Activated CD4-positive, alpha-beta memory T cell treated with anti-CD3 and anti-CD28 coated beads, Interleukin-2, amount 10 ng/mL, durations not matched to agents 7 days and 5 days (primary cell): ENCODE measurements at regions of chrX and their contacts with region 1.

Region 1: DNA sequence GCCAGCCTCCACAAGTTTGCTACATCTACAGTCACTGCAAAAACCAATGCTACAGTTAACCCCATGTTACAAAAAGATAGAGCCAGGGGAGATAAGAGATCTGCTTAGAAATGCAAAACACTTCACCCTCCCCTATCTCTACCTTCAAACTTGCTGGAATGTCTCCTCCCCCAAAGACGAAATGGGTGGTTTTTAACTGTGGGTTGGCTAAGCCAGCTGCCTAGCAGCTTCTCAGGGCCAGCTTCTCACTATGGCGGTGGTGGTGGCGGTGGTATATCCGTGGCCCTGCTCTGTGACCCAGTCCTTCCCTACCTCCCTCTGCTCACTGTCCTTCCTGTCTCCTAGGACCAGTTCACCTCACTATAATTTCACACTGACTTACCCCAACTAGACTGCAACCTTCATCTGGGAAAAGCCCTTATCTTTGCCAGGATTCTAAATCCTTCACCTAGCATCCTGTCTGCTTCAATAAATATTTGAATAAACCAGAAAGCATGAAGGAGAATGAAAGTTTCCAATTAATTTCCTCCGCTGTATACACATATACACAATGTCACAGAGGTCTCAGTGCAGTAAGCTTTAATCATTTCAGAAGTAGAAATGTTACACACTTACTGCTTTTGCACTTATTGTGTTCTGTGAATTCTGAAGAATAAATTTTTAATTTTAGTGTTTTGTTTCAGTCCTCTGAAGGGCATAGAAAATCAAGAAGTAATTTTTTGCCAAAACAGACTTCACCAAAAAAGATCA is 46.3 kb downstream of the SH3KBP1 start:
- DNase-seq: peak; percentile 70
- H3K4me3 Mint-ChIP-seq: peak overlapping the region; percentile 54
- H3K27ac Mint-ChIP-seq: peak overlapping the region; percentile 91
- H3K4me1 Mint-ChIP-seq: peaks cover 71% of the 10 kb centered on the region
- H3K27me3 Mint-ChIP-seq: no peaks in the 10 kb centered on the region

Region 2: DNA sequence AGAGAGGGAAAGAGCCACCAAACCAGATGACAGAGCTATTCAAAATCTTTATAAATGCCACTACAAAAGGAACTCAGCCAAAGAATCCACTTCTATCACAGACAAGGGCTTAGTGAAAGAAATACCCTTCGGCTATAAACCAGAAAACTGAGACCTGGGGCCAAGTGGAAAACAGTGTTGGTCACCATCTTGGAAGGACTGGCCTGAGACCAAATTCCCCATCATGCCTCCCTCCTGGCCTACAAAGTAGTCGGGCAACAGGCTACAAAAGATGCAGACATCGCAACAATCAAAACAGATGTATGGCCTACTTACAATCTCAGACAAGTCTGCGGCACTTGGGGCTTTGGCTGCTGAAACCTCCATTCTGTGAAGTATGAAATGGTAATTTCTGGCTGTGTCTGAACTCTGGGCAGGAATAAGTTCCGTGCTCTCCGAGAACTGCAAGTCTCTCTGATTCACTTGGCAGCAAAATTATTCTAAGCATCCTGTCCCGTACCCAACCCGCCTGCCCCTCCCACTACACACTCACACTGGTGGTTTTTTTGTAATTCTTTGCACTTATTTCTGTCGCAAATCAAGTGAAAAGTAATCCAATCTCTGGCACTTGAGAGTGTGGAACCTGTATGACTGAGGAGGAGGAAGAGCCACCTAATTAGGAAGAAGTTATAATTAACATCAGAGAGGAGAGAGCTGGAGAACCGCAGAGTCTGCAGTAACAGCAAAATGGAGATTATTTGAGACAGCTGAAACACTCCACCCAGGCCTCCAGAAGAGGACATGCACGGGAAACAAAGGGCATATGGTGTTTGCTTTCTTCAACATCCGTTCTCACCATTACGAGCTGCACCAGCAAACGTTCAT is 41.5 kb before region 1 on chrX:
- CTCF ChIA-PET with region 1: interaction called, 3 read pairs
- POLR2A ChIA-PET with region 1: interaction called, 13 read pairs
- DNase-seq: peak; percentile 62
- H3K4me3 Mint-ChIP-seq: peak overlapping the region; percentile 90
- H3K27ac Mint-ChIP-seq: peak overlapping the region; percentile 98
- H3K4me1 Mint-ChIP-seq: peaks cover 59% of the 10 kb centered on the region
- H3K27me3 Mint-ChIP-seq: no peaks in the 10 kb centered on the region

Region 3: DNA sequence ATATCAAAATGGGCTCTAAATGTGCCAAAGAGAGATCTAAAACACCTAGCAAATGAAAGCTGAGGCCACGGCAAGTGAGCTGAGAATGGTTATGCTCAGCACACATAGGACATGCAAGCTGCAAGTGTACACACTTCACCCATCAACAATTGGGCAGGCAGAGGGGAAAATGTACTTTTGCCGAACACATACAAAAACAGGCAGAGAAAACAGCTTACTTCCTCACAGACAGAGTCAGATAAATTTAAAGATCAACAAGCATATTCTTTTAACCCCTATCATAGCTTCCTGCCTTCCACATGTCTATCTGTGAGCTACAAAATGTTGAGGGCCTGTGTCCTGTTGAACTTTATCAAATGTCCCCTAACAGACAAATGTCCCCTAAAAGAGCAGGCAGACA is 14.0 kb before region 1 on chrX:
- CTCF ChIA-PET with region 1: interaction called, 7 read pairs
- POLR2A ChIA-PET with region 1: interaction called, 10 read pairs
- DNase-seq: no peak
- H3K4me3 Mint-ChIP-seq: no peak overlapping the region
- H3K27ac Mint-ChIP-seq: peak overlapping the region; percentile 79
- H3K4me1 Mint-ChIP-seq: peaks cover 24% of the 10 kb centered on the region
- H3K27me3 Mint-ChIP-seq: no peaks in the 10 kb centered on the region

Region 4: DNA sequence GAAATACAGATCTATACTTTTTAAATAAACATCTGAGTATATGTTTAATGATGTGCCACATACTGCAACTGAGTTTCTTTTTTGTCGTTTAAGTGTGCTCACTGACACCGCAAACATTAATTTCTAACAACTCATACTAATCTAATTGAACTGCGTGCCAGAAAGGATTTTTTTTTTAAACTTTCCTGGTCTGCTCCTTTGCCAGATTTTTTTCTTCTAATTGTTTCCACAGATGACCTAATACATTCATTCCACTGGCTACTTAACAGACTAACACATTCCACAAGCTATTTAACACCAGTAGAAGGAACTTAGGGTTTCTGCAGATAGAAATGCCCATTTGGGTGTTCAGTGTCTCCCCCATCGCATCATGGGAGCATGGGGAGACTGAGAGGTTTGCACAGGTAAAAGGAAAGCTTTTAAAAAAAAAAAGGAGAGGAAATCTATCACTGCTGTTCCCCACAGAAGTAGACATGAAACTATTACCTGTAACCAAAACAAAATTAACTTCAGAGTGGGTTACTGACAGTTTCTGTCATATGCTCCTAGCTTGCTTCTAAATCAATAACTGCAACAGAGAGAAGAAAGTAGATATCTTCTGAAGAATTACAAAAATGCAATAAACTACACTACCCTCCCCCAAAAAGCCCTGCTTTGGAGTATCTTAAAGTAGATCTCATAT is 14.8 kb after region 1 on chrX:
- CTCF ChIA-PET with region 1: interaction called, 4 read pairs
- POLR2A ChIA-PET with region 1: interaction called, 10 read pairs
- DNase-seq: no peak
- H3K4me3 Mint-ChIP-seq: no peak overlapping the region
- H3K27ac Mint-ChIP-seq: peak overlapping the region; percentile 70
- H3K4me1 Mint-ChIP-seq: peaks cover 23% of the 10 kb centered on the region
- H3K27me3 Mint-ChIP-seq: no peaks in the 10 kb centered on the region